ENCODE measurements at regions of chr3 and their contacts with region 1.

Region 1: GRCh38 chr3:58129041-58129770 is 81.6 kb downstream of the DNASE1L3 start:
- DNase-seq: no peak

Region 2: GRCh38 chr3:57726397-57726796 is 402.8 kb before region 1 on chr3:
- intact Hi-C with region 1: no loop called
- DNase-seq: no peak

Region 3: DNA sequence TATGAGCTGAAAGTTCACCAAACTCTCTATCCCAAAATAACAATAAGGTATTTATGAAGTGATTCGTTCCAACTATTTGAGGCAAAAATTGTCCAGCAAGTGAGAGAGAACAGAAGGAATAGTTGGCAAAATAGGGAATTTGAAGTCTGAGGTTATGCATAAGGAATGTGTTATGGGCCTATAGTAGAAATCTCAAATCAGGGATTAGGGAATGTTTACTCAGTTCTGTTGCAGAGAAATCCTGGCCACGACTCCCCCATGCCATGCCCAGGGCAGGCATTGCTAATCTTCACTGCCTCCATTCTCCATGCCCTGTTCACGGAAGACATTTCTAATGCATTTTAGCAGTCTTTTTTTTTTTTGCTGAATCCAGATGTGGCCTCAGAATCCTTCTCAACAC is 62.4 kb before region 1 on chr3:
- intact Hi-C with region 1: loop called (anchors 5 kb)
- DNase-seq: no peak

Region 4: DNA sequence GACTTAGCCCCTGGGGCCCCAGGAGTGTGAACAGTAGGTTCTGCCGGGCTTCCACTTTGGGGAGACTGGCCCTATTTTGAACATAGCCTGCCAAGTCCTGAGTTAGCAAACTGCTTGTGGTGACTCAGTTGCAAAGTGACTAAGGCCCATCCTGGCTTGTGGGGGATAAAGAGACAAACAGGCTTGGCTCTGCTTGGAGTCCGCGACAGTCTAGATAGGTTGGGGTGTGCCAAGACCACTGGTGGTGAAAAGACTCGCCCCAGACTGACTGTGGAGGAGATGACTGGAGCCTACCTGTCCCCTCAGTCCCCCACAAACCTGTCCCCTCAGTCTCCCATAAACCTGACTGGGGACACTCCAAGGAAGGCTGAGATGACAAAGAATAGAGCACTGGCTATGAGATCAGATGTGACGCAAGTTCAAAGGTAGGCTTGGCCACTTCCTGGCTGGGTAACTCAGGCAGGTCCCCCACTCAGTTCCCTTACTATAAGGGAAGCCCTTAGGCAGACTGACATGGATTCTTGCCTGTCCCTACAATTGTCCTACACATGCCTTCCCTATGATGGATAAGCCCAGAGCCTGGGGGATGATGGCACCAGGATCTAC is 77.3 kb after region 1 on chr3:
- intact Hi-C with region 1: no loop called
- DNase-seq: no peak

Measured in cardiac septum (tissue), 1 donor.